ENCODE measurements at regions of chr9 and their contacts with region 1.

Region 1: DNA sequence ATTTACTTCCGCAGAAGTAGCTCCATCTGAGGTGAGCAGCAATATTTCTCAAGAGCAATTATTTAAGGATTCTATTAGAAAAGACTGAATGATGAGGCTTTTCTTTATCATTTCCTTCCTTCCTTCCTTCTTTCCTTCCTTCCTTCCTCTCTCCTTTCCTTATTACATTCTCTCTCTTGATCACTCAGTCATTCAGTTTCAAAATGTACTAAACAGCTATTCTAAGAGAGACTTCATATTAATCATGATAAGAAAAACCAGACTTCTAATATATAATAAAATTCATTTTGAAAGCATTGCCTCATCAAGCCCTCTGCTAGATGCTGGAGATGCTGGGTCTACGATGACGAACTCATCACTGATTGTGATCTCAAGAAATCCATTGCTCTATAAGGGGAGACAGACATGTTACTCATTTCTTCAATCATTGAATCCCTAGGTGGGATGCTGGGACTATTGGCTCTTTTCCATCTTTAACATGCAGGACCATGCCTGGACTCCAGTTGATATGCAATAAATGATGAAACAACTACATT is 30.4 kb upstream of the PAPPA start:
- DNase-seq: peak; percentile 88
- H3K4me3 ChIP-seq: no peak overlapping the region
- H3K27ac ChIP-seq: peak overlapping the region; percentile 85
- H3K4me1 ChIP-seq: peaks cover 21% of the 10 kb centered on the region
- H3K27me3 ChIP-seq: no peaks in the 10 kb centered on the region
- CTCF ChIP-seq: no peak

Region 2: DNA sequence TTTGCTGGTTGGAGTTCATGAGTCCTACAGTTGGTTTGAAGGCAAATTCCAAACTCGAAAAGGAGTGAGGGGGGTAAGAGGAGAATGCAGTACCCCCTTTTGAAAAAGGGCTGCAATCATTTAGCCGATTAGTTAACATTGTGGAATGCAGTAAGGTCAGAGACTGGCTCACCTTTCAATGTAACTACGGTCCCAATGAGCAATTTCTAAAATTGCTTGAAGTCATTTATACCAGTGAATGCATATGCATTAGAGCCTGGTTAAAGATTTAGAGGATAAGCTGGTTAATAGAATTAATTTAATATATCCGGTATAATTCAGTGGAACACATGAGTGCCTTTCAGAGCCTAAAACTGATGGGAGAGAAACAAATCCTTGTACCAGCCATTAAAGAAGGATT is 142.3 kb before region 1 on chr9:
- CTCF ChIA-PET with region 1: no interaction called
- POLR2A ChIA-PET with region 1: no interaction called
- intact Hi-C with region 1: loop called (anchors 1 kb)
- DNase-seq: peak; percentile 91
- H3K4me3 ChIP-seq: no peak overlapping the region
- H3K27ac ChIP-seq: peak overlapping the region; percentile 51
- H3K4me1 ChIP-seq: peaks cover 47% of the 10 kb centered on the region
- H3K27me3 ChIP-seq: no peaks in the 10 kb centered on the region
- CTCF ChIP-seq: no peak

Region 3: GRCh38 chr9:116059466-116059865 is 63.8 kb before region 1 on chr9:
- CTCF ChIA-PET with region 1: no interaction called
- POLR2A ChIA-PET with region 1: no interaction called
- intact Hi-C with region 1: no loop called
- DNase-seq: no peak
- H3K4me3 ChIP-seq: no peak overlapping the region
- H3K27ac ChIP-seq: no peak overlapping the region
- H3K4me1 ChIP-seq: no peaks in the 10 kb centered on the region
- H3K27me3 ChIP-seq: no peaks in the 10 kb centered on the region
- CTCF ChIP-seq: no peak

Measured in A673 (cell line).